ENCODE measurements at regions of chr1 and their contacts with region 1.

Region 1: DNA sequence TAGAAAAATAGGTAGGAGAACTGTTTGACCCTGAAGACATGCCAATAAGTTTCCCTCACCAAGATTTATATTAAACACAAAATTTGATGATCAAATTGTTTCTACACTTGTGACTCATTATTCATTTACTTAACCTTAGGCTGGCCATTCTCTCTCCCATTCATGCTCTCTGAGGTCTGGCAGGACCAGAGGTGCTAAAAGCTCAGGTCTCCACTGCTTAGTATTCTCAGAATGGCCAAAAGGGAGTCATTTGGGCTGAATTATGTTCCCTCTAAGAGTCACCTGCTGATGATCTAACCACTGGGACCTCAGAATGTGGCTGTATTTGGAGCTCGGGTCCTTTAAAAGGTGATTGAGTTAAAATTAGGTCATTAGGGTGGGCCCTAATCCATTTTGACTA is 47.1 kb upstream of the ATP1B1 start:
- DNase-seq: no peak
- ATAC-seq: no peak

Region 2: GRCh38 chr1:169098380-169098779 is 39.0 kb after region 1 on chr1:
- intact Hi-C with region 1: loop called (anchors 5 kb)
- DNase-seq: no peak
- ATAC-seq: no peak

Measured in Right ventricle myocardium inferior (tissue), 1 donor.